Caco-2 (cell line): ENCODE measurements at regions of chr1 and their contacts with region 1.

Region 1: GRCh38 chr1:211514030-211514754 is 22.2 kb upstream of the RD3 start:
- DNase-seq: peak; percentile 90 to 91
- H3K4me3 ChIP-seq: no peak overlapping the region
- H3K4me3 Mint-ChIP-seq: peak overlapping the region; percentile 70
- H3K27ac Mint-ChIP-seq: peak overlapping the region; percentile 12
- H3K4me1 ChIP-seq: peaks cover 36% of the 10 kb centered on the region
- H3K4me1 Mint-ChIP-seq: peaks cover 20% of the 10 kb centered on the region
- H3K27me3 ChIP-seq: no peaks in the 10 kb centered on the region
- H3K27me3 Mint-ChIP-seq: peaks cover 11% of the 10 kb centered on the region
- CTCF ChIP-seq: peak; percentile 74 to 85

Region 2: DNA sequence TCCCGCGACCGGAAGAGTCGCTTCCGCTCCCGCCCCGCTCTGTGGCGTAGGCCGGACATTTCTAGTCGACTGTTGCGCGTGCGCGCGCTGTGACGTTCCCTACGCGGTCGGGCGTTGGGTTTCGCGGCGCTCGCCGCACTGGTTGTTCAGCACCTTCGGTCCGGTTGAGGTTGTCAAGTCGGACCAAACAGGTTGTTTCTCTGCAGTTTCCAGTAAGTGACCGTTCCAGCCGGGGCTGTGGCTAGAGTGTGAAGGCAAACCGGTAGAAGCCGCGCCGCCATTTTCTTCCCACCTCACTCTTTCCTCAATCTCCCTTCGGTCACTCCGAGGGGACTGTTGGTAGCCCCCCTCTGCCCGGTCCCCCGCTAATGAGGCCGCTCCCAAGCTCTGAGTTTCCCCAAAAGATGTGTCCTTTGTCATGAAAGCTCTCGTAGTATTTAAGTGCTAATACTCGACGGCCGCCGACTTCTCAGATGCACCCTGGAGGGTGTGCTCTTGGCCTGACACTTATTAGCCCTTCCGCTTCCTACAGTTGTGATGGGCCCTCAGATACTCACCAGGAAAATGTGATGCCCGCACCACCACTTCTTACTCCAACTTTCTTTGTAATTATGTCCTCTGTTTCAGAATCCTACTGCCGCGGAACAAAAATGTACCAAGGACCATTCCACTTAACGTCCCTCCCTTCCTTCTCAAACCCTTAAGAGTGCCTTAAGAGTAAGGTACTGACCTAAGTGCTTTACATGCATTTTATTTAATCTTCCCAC is 131.3 kb before region 1 on chr1:
- CTCF ChIA-PET with region 1: interaction called, 4 read pairs
- POLR2A ChIA-PET with region 1: interaction called, 4 read pairs
- intact Hi-C with region 1: loop called (anchors 2 kb)
- DNase-seq: peak; percentile 93 to 94
- H3K4me3 ChIP-seq: peak overlapping the region; percentile 58
- H3K4me3 Mint-ChIP-seq: peak overlapping the region; percentile 95
- H3K27ac Mint-ChIP-seq: peak overlapping the region; percentile 100
- H3K4me1 ChIP-seq: no peaks in the 10 kb centered on the region
- H3K4me1 Mint-ChIP-seq: peaks cover 14% of the 10 kb centered on the region
- H3K27me3 ChIP-seq: no peaks in the 10 kb centered on the region
- H3K27me3 Mint-ChIP-seq: no peaks in the 10 kb centered on the region
- CTCF ChIP-seq: no peak

Region 3: DNA sequence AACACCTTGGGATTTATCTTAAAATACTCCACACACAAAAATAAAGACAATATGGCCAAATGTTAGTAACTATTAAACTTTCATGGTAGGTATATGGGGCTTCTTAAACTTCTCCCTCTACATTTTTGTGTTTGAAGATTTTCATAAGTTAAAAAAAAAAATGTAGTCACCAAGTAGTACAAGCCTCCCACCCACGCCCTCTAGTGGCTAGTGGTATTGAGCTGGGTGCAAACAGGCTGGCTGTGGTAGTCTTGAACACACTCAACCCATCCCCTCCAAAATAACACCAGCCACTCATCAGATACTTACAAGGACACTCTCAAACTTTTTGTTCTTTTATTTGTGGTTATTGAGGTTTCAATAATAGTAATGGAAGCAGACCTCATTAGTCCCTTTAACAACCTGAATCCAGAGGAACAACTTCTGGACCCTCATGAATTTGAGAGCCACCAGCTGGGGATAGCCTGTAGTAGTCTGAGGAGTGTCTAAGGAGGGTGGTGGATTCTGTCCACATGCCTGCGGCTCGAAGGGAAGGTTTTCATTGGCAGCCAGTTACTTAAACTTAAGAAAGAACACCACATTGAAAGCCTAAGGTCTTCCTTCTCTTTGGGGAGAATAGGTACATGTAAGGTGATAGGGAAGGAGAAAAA is 37.9 kb before region 1 on chr1:
- CTCF ChIA-PET with region 1: interaction called, 20 read pairs
- POLR2A ChIA-PET with region 1: no interaction called
- intact Hi-C with region 1: no loop called
- DNase-seq: peak; percentile 78 to 81
- H3K4me3 ChIP-seq: no peak overlapping the region
- H3K4me3 Mint-ChIP-seq: no peak overlapping the region
- H3K27ac Mint-ChIP-seq: no peak overlapping the region
- H3K4me1 ChIP-seq: no peaks in the 10 kb centered on the region
- H3K4me1 Mint-ChIP-seq: no peaks in the 10 kb centered on the region
- H3K27me3 ChIP-seq: peaks cover 2% of the 10 kb centered on the region; the same call in 1 of the 2 replicates
- H3K27me3 Mint-ChIP-seq: peaks cover 3% of the 10 kb centered on the region
- CTCF ChIP-seq: peak; percentile 77 to 92

Region 4: GRCh38 chr1:211566431-211567025 is 52.3 kb after region 1 on chr1:
- CTCF ChIA-PET with region 1: interaction called, 5 read pairs
- POLR2A ChIA-PET with region 1: no interaction called
- intact Hi-C with region 1: loop called (anchors 2 kb)
- DNase-seq: no peak
- H3K4me3 ChIP-seq: no peak overlapping the region
- H3K4me3 Mint-ChIP-seq: no peak overlapping the region
- H3K27ac Mint-ChIP-seq: no peak overlapping the region
- H3K4me1 ChIP-seq: no peaks in the 10 kb centered on the region
- H3K4me1 Mint-ChIP-seq: no peaks in the 10 kb centered on the region
- H3K27me3 ChIP-seq: no peaks in the 10 kb centered on the region
- H3K27me3 Mint-ChIP-seq: no peaks in the 10 kb centered on the region
- CTCF ChIP-seq: no peak

Region 5: DNA sequence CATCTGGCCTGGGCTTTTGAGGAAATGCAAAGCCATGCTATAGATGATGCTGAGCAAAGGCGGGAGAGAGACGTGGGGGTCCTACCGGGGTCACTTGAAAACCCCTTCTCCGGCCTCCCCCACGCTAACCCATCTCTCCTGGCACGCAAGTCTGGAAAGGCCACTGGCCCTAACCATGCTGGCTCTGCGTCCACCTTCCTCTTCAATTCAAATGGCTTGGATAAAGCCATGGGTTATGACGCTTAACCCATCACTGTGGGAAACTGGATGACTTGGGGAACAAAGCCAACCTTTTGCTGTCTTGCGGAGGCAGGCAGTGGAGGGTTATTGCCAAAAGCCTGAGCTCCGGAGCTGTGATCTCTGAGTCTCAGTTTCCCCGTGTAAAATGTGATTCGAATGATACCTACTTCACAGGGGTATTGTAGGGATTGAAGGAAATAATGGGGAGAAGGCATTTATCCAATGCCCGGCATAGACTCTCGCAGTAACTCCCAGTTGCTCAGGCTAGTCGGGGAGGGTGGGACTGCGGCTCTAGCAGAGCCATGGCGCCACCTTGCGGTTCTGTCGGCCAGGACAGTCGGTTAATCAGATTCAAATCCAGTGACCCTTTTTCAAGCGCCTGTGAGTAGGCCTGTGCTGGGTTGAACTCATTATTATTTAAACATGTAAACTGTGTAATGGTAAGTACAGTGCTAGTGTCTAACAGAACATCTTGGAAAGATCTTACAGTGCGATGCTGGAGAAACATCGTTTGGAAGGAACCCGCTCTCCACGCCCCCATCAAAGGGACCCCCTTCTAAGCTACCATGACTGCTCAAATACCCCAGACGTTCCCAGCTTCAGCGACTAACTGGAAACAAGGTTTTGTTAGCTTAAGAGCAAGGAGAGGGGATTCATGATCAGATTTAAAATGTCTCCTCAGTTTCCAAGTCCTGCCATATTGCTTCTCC is 140.9 kb after region 1 on chr1:
- CTCF ChIA-PET with region 1: interaction called, 4 read pairs
- POLR2A ChIA-PET with region 1: no interaction called
- intact Hi-C with region 1: loop called (anchors 1 kb)
- DNase-seq: peak; percentile 84 to 89
- H3K4me3 ChIP-seq: no peak overlapping the region
- H3K4me3 Mint-ChIP-seq: no peak overlapping the region
- H3K27ac Mint-ChIP-seq: no peak overlapping the region
- H3K4me1 ChIP-seq: peaks cover 21% of the 10 kb centered on the region
- H3K4me1 Mint-ChIP-seq: peaks cover 22% of the 10 kb centered on the region
- H3K27me3 ChIP-seq: no peaks in the 10 kb centered on the region
- H3K27me3 Mint-ChIP-seq: no peaks in the 10 kb centered on the region
- CTCF ChIP-seq: peak; percentile 90 to 91